AG04449 (cell line): ENCODE measurements at regions of chr10 and their contacts with region 1.

Region 1: DNA sequence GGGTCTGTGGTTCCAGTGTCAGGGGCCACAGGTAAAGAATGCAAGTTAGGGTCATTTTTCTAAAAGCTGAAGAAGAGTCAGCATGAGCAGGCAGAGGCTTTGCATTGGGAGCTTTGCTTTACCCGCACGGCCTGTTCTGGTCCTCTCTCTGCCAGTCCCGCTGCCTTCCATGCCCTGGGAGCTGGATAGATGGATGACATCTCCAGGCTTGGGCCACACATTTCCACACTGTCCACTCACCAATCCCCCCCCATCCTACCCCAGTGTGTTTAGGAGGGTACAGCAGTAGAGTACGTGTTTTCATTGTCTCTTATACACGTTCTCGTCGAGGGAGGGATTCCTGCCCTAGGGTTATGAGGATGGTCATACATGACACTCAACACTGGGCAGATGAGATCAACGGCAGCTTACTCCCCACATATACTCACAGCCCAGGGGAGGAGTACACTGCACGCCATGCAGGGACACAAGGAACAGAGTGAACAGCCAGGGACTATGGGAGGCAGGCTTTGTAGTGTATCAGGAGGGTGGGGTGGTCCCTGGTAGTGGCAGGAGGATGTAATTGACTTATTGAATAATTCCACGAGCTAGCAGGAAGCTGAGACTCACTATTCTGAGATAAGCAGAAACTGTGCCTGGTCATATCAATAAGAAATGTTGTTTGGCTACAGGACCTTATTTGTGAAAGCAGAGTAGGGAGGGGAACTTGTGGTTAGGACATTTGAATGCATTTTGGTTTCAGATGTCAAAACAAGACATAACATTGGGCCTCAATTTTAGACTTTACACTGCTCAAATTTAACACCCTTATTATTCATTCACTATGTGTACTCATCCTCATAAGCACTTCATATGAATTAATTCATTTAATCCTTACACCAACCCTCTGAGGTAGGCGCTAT is 36.6 kb downstream of the PLPP4 start:
- DNase-seq: no peak
- H3K4me3 ChIP-seq: no peak overlapping the region
- CTCF ChIP-seq: no peak

Region 2: GRCh38 chr10:120480065-120480600 is 13.5 kb before region 1 on chr10:
- CTCF ChIA-PET with region 1: interaction called, 11 read pairs
- POLR2A ChIA-PET with region 1: no interaction called
- DNase-seq: no peak
- H3K4me3 ChIP-seq: no peak overlapping the region
- CTCF ChIP-seq: peak; percentile 29